Gastrocnemius medialis (tissue), 4 donors: ENCODE measurements at regions of chr3 and their contacts with region 1.

Region 1: GRCh38 chr3:159988617-159989271 is at the start of gene IL12A:
- DNase-seq: peak; percentile 27 to 46
- ATAC-seq: peak; percentile 87 to 94
- H3K4me3 ChIP-seq: peak within 1 kb of the TSS; percentile 70 to 98 (median 78)
- H3K27ac ChIP-seq: peak within 1 kb of the TSS in 1 of 4 donors; percentile 14
- H3K4me1 ChIP-seq: peaks cover 3 to 5% of the 10 kb centered on the region in 2 donors
- H3K27me3 ChIP-seq: no peaks in the 10 kb centered on the region
- CTCF ChIP-seq: peak; percentile 72 to 95 (median 81)
- POLR2A ChIP-seq: no peak
- total RNA-seq, gene IL12A: not detected

Region 2: GRCh38 chr3:158845765-158846350 is 1142.9 kb before region 1 on chr3:
- in situ Hi-C with region 1: loop called in 1 of 4 experiments (anchors 25 kb)
- intact Hi-C with region 1: no loop called
- DNase-seq: no peak
- ATAC-seq: no peak
- H3K4me3 ChIP-seq: no peak overlapping the region
- H3K27ac ChIP-seq: no peak overlapping the region
- H3K4me1 ChIP-seq: no peaks in the 10 kb centered on the region
- H3K27me3 ChIP-seq: no peaks in the 10 kb centered on the region
- CTCF ChIP-seq: peak; percentile 62 to 77 (median 68)
- POLR2A ChIP-seq: no peak

Region 3: DNA sequence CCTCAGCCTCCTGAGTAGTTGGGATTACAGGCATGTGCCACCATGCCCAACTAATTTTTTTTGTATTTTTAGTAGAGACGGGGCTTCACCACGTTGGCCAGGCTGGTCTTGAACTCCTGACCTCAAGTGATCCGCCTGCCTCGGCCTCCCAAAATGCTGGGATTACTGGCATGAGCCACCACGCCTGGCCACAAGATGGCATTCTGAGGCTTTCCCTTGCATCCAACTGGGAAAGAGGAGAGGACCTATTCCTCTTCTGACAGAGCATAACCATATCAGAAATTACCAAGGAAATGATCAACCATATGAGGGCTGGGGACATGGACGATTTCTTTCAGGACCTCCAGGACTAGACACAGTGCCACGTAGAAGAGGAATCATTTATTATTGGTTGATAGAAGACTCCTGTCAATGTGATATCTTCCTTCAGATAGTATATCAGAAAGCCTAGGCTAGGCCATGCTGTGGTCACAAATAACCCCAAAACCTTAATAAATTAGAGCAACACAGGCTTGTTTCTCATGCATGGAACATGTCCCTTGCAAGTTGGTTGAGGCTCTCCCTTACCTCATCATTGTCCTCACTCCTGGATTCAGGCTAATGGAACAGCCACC is 372.4 kb before region 1 on chr3:
- in situ Hi-C with region 1: loop called in 1 of 4 experiments (anchors 25 kb)
- intact Hi-C with region 1: no loop called
- DNase-seq: no peak
- ATAC-seq: no peak
- H3K4me3 ChIP-seq: no peak overlapping the region
- H3K27ac ChIP-seq: no peak overlapping the region
- H3K4me1 ChIP-seq: no peaks in the 10 kb centered on the region
- H3K27me3 ChIP-seq: no peaks in the 10 kb centered on the region
- CTCF ChIP-seq: peak in 3 of 5 experiments; percentile 42 to 50 (median 48)
- POLR2A ChIP-seq: no peak

Region 4: GRCh38 chr3:159828542-159828943 is 160.2 kb before region 1 on chr3:
- in situ Hi-C with region 1: no loop called
- intact Hi-C with region 1: loop called (anchors 5 kb)
- DNase-seq: no peak
- ATAC-seq: peak; percentile 61 to 66
- H3K4me3 ChIP-seq: peak overlapping the region; percentile 17 to 51 (median 24)
- H3K27ac ChIP-seq: peak overlapping the region; percentile 80 to 84 (median 82)
- H3K4me1 ChIP-seq: peaks cover 34 to 48% of the 10 kb centered on the region in 2 donors
- H3K27me3 ChIP-seq: no peaks in the 10 kb centered on the region
- CTCF ChIP-seq: peak; percentile 58 to 65 (median 63)
- POLR2A ChIP-seq: no peak

Region 5: GRCh38 chr3:159884661-159885402 is 103.9 kb before region 1 on chr3:
- in situ Hi-C with region 1: no loop called
- intact Hi-C with region 1: loop called (anchors 5 kb)
- DNase-seq: no peak
- ATAC-seq: no peak
- H3K4me3 ChIP-seq: no peak overlapping the region
- H3K27ac ChIP-seq: peak overlapping the region in 3 of 4 donors; percentile 39 to 92 (median 83)
- H3K4me1 ChIP-seq: peaks cover 60 to 68% of the 10 kb centered on the region in 2 donors
- H3K27me3 ChIP-seq: no peaks in the 10 kb centered on the region
- CTCF ChIP-seq: peak; percentile 24 to 57 (median 41)
- POLR2A ChIP-seq: no peak

Region 6: DNA sequence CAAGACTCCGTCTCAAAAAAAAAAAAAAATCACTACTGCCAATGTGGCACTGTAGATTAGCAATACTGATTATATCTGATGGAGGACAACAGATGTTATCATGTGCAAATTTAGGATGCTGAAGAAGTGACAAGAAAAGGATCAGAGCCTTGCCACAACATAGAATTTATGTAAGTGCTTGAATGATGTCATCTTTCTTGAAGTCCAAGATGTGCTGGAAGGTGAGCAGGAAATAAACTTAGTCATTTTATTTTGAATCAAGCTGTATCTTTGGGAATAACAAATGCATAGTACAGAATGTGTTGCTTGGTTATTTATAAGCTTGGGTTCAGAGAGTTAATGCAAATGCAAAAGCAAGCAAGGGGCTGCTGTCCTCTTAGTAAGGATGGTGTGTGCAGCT is 47.0 kb after region 1 on chr3:
- in situ Hi-C with region 1: no loop called
- intact Hi-C with region 1: no loop called
- DNase-seq: no peak
- ATAC-seq: no peak
- H3K4me3 ChIP-seq: no peak overlapping the region
- H3K27ac ChIP-seq: no peak overlapping the region
- H3K4me1 ChIP-seq: peaks cover 0 to 5% of the 10 kb centered on the region in 2 donors
- H3K27me3 ChIP-seq: peaks cover 11 to 22% (median 18%) of the 10 kb centered on the region in 3 donors
- CTCF ChIP-seq: no peak
- POLR2A ChIP-seq: no peak